Activated CD4-positive, alpha-beta memory T cell treated with anti-CD3 and anti-CD28 coated beads, Interleukin-2, amount 10 ng/mL, durations not matched to agents 7 days and 5 days (primary cell): ENCODE measurements at regions of chr7 and their contacts with region 1.

Region 1: DNA sequence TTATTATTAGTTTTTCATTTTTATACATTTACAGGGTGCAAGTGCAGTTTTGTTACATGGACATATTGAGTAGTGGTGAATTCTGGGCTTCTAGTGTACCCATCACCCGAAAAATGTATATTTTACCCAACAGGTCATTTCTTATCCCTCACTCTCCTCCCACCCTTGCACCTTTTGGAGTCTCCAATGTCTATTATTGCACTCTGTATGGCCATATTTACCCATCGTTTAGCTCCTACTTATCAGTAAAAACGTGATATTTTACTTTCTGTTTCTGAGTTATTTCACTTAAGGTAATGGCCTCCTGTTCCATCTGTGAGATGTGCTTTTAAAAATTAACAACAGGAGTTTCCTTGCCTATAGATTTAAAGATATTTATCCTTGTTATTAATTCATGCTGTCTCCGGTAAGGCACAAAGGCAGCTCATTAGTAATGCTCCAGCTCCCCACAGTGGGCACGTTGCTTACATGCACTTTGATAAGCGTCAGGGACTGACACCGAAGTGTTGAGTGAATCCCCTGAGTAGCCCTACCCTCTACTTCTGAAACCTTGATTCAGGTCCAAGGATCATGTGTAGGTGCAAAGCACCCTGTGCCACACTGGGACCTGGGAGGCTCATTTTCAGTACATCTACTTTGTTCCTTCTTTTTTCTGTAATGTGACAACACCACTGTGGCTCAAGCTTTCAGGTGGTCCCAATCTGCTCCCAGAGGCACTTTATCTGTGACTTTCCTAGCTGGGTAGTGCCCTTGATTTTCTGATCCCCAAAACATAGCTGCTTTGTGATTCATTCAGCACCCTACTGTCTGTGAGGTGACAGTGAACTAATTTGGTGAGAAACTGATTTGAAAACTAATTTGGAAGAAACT is 27.3 kb downstream of the HYAL4 start:
- DNase-seq: peak; percentile 27
- H3K4me3 Mint-ChIP-seq: no peak overlapping the region
- H3K27ac Mint-ChIP-seq: no peak overlapping the region
- H3K4me1 Mint-ChIP-seq: no peaks in the 10 kb centered on the region
- H3K27me3 Mint-ChIP-seq: peaks cover 15% of the 10 kb centered on the region

Region 2: GRCh38 chr7:123624527-123625183 is 247.6 kb before region 1 on chr7:
- CTCF ChIA-PET with region 1: interaction called, 14 read pairs
- POLR2A ChIA-PET with region 1: no interaction called
- DNase-seq: peak; percentile 73
- H3K4me3 Mint-ChIP-seq: no peak overlapping the region
- H3K27ac Mint-ChIP-seq: no peak overlapping the region
- H3K4me1 Mint-ChIP-seq: no peaks in the 10 kb centered on the region
- H3K27me3 Mint-ChIP-seq: peaks cover 5% of the 10 kb centered on the region

Region 3: DNA sequence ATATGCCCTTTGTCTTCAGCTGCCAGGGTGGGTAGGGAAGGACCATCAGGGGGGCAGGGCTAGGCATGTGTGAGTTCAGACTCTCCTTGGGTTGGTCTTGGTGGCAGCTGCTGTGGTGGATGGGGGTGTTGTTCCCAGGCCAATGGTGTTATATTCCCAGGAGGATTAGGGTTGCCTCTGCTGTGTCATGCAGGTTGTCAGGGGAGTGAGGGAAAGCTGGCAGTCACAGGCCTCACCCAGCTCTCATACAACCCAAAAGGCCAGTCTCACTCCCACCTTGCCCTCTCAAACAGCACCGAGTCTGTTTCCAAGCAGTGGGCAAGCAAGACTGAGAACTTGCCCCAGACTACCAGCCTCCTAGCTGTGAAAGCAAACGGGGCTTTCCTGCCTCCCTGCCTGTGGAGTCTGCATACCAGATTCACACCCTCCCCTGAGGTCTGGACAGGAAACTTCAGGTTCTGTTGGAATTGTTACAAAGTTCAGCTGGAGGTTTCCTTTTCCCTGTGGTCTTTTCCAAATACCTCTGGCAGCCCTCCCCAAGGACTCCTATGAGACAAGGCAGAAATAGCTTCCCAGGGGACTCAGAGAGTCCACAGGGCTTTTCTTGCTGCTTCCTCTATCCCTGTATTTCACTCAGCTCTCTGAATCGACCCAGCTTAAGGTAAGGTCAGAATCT is 25.9 kb before region 1 on chr7:
- CTCF ChIA-PET with region 1: no interaction called
- POLR2A ChIA-PET with region 1: no interaction called
- DNase-seq: no peak
- H3K4me3 Mint-ChIP-seq: no peak overlapping the region
- H3K27ac Mint-ChIP-seq: no peak overlapping the region
- H3K4me1 Mint-ChIP-seq: no peaks in the 10 kb centered on the region
- H3K27me3 Mint-ChIP-seq: peaks cover 6% of the 10 kb centered on the region